ENCODE measurements at regions of chr15 and their contacts with region 1.

Region 1: GRCh38 chr15:74857082-74857655 is 14.2 kb upstream of the ULK3 start:
- DNase-seq: no peak
- H3K4me3 ChIP-seq: no peak overlapping the region
- H3K27ac ChIP-seq: no peak overlapping the region
- H3K4me1 ChIP-seq: no peaks in the 10 kb centered on the region
- H3K27me3 ChIP-seq: no peaks in the 10 kb centered on the region
- CTCF ChIP-seq: no peak
- POLR2A ChIP-seq: no peak

Region 2: GRCh38 chr15:74873036-74873755 is 16.0 kb after region 1 on chr15 and contains the start of gene SCAMP2:
- CTCF ChIA-PET with region 1: interaction called, 10 read pairs
- POLR2A ChIA-PET with region 1: interaction called, 3 read pairs
- dilution Hi-C with region 1: no loop called
- intact Hi-C with region 1: no loop called
- DNase-seq: peak; percentile 96
- H3K4me3 ChIP-seq: peak within 1 kb of the TSS; percentile 42 to 77 (median 72)
- H3K27ac ChIP-seq: peak within 1 kb of the TSS; percentile 89
- H3K4me1 ChIP-seq: peaks cover 34% of the 10 kb centered on the region
- H3K27me3 ChIP-seq: peaks cover 3% of the 10 kb centered on the region in 2 experiments
- CTCF ChIP-seq: no peak
- POLR2A ChIP-seq: peak; percentile 93
- total RNA-seq, gene SCAMP2: 61.1 and 67.3 TPM in 2 replicates

Measured in endothelial cell of umbilical vein (primary cell).